MCF 10A (cell line): ENCODE measurements at regions of chr1 and their contacts with region 1.

Region 1: DNA sequence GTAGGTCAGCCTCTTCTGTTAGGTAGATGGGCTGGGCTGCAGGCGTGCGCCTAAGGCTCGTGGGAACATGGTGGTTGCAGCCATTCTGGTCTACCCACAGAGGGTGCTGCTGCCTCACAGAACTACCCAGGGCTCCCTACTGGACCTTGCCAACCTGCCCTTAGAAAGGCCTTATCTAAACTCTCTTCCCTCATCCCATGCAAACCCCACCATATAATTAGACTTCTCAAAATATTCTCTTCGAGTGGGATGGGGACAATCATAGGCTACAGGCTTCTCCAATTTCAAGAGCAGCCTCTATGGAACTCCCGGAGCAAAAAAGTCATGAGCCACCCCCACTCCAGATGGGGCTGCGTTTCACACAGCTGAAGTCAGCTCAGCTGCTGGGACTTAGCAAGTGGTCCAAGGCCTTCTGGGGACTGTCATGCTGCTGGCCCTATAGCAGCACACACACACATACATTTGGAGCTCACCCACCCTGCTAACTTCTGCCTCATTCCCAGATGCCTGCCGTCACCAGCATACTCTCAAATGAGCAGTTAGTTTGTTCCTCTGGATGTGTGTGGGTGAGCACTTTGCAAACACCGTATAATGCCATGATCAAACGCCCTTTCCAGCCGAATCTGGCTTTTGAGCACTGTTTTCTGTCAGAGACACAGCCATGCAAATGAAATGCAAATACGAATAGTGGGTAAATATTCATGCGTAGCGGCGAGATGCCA is 6.1 kb upstream of the SDHB start:
- DNase-seq: peak; percentile 77
- H3K4me3 Mint-ChIP-seq: no peak overlapping the region
- H3K27ac Mint-ChIP-seq: no peak overlapping the region
- H3K4me1 Mint-ChIP-seq: no peaks in the 10 kb centered on the region
- H3K27me3 Mint-ChIP-seq: no peaks in the 10 kb centered on the region
- CTCF ChIP-seq: peak; percentile 85

Region 2: DNA sequence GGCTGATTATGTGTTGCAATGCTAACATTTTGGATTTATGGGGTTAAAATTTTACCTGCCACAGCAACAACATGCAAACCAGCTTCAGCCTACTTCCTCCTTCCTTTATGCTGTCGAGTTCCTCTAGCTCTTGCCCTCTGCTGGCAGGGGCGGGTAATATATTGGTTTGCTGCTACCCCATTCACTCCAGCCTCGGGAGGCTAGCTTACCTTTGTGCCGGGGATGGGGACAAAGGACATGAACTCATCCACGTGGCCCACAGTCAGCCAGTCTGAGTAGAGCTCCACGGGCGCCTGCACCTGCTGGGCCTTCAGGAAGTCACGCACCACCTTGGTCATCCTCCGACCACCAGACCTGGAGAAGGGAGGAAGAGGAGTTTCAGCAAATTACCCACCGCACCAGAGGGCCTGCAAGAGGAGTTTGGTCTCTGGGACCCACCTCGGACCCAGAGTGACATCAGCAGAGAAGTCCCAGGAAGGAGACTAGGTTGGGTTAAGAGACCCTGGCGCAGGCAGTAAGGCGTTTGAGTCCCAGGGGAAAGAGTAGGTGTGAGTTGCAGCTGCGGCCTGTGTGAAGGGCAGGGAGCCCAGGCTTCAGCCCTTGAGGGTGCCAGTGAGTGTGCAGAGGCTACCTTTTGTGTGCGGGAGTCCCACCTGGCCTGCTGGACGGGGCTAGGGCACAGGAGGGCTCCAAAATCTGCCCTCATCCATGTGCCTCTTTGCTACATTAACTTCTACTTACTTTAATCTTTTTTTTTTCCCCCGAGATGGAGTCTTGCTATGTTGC is 15.8 kb after region 1 on chr1:
- CTCF ChIA-PET with region 1: interaction called, 14 read pairs
- POLR2A ChIA-PET with region 1: interaction called, 3 read pairs
- intact Hi-C with region 1: loop called (anchors 1 kb)
- DNase-seq: peak; percentile 69
- H3K4me3 Mint-ChIP-seq: no peak overlapping the region
- H3K27ac Mint-ChIP-seq: no peak overlapping the region
- H3K4me1 Mint-ChIP-seq: peaks cover 4% of the 10 kb centered on the region
- H3K27me3 Mint-ChIP-seq: no peaks in the 10 kb centered on the region
- CTCF ChIP-seq: peak; percentile 48

Region 3: DNA sequence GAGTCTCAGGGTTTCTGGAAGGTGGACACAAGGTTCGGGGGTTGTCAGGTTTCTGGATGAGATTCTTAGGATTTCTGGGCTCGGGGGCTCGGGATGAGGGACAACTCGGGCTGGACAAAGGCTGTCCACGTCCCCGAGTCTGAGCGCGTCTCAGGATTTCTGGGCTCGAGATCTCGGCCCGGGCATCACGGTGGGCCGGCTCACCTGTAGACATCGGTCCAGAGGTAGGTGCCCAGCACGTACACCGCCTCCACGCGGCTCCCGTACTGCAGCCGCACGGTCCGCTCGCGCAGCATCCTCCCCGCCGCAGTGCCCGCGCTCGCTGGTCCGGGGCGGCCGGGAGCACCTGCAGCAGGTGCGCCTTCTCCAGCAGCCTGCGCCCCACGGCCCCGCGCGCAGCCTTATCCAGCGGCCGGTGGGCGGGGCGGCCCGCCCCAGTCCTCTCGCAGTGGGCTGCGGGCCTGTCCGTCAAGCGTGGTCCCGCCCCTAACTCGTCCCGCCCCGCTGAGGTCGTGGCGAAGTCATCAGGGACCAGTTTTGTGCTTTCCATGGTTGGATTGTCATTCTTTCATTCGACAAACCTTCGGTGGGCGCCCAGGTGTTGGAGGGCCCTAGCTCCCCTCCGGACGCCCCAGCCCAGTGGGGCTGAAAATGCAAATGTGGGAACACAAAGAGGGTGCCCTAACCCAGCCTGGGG is 59.3 kb after region 1 on chr1 and contains the start of gene PADI2:
- CTCF ChIA-PET with region 1: interaction called, 5 read pairs
- POLR2A ChIA-PET with region 1: no interaction called
- intact Hi-C with region 1: loop called (anchors 1 kb)
- DNase-seq: peak; percentile 60
- H3K4me3 Mint-ChIP-seq: no peak within 1 kb of the TSS
- H3K27ac Mint-ChIP-seq: no peak within 1 kb of the TSS
- H3K4me1 Mint-ChIP-seq: no peaks in the 10 kb centered on the region
- H3K27me3 Mint-ChIP-seq: peaks cover 14% of the 10 kb centered on the region
- CTCF ChIP-seq: no peak
- total RNA-seq, gene PADI2: 0.16 and 0.20 TPM in 2 replicates

Region 4: DNA sequence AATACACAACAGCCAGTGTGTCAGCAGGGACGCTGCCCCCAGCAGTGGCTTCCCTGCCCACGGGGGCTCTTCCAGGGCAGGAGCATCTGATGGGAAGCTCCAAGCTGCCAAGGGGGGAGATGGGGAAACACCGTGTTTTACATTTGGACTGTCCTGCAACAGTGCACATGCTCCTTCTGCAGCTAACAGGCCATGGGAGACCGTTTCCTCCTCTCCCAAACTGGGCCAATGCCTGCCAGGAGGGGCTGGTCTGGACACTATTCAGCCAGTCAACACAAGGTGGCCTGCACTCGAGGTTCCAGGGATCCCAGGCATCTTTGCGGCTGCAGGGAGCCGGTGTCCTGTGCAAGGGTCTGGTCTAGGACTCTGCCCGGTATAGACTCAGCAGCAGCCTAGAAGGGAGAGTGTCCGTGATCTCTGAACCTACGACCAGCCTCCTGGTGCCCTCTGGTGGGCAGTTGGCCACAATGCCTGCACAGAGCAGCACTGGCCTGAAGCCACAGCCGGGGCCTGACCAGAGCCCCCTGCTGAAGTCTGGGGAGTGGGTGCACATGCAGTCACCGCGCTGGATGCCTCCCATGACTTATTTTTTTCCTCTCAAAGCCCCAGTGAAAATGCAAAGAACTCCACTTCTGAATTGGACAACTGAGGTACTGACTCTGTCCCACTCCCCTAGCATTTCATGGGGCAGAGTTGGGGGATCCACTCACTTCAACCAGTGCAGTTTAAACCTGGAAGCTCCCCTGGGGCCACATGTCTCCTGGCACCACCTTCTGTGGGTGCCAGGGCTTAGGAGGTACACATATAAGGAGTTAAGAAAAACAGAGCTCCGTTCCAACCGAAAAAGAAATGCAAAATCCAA is 346.2 kb after region 1 on chr1:
- CTCF ChIA-PET with region 1: interaction called, 7 read pairs
- POLR2A ChIA-PET with region 1: no interaction called
- intact Hi-C with region 1: loop called (anchors 1 kb)
- DNase-seq: peak; percentile 61
- H3K4me3 Mint-ChIP-seq: no peak overlapping the region
- H3K27ac Mint-ChIP-seq: no peak overlapping the region
- H3K4me1 Mint-ChIP-seq: peaks cover 10% of the 10 kb centered on the region
- H3K27me3 Mint-ChIP-seq: no peaks in the 10 kb centered on the region
- CTCF ChIP-seq: peak; percentile 82